ENCODE measurements at regions of chr19 and their contacts with region 1.

Region 1: GRCh38 chr19:49097455-49098288 is 12.4 kb downstream of the SNRNP70 start:
- DNase-seq: peak; percentile 68
- H3K4me3 Mint-ChIP-seq: no peak overlapping the region
- H3K27ac Mint-ChIP-seq: no peak overlapping the region
- H3K4me1 Mint-ChIP-seq: peaks cover 15% of the 10 kb centered on the region
- H3K27me3 Mint-ChIP-seq: no peaks in the 10 kb centered on the region

Region 2: DNA sequence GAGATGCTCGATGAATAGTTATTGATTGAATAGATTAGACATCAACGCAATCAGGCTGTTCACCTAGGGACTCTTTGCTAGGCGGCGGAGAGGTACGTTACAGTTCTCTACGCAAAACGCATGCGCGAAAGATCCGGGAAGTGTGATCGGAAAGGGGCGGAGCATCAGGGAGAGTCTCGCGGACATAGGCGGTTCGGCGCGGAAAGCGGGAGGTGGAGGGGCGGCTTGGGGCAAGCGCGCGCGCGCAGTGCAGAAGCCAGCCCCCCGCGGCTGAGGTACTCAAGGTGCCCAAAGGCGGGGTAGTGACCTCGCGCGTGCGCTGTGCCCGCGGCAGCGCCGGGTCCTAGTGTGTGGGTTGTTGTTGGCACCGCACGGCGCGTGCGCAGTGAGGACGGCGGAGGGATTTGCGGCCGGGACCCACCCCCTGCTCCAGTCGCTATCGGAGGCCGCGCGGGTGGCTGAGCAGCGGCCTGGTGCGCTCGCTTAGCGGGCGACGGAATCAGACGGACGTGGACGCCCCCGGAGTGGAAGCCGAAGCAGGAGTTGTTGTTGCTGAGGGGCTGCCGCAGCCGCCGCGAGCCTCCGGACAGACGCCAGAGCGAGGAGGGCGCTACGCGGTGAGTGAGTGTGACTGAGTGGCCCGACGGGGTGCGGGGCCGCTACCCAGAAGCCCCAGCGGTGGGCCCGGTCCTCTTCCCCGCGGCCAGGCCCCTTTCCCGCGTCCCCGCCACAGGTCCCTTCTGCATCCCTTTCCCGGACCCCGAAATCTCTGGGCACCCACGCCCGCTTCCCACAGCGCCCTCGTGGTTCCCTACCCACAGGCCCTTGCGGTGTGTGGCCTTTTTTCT is 12.4 kb before region 1 on chr19 and contains the start of gene SNRNP70:
- intact Hi-C with region 1: loop called (anchors 1 kb)
- DNase-seq: peak; percentile 99
- H3K4me3 Mint-ChIP-seq: peak within 1 kb of the TSS; percentile 99
- H3K27ac Mint-ChIP-seq: peak within 1 kb of the TSS; percentile 80
- H3K4me1 Mint-ChIP-seq: peaks cover 25% of the 10 kb centered on the region
- H3K27me3 Mint-ChIP-seq: peaks cover 2% of the 10 kb centered on the region
- total RNA-seq, gene SNRNP70: 259 and 272 TPM in 2 replicates

Region 3: DNA sequence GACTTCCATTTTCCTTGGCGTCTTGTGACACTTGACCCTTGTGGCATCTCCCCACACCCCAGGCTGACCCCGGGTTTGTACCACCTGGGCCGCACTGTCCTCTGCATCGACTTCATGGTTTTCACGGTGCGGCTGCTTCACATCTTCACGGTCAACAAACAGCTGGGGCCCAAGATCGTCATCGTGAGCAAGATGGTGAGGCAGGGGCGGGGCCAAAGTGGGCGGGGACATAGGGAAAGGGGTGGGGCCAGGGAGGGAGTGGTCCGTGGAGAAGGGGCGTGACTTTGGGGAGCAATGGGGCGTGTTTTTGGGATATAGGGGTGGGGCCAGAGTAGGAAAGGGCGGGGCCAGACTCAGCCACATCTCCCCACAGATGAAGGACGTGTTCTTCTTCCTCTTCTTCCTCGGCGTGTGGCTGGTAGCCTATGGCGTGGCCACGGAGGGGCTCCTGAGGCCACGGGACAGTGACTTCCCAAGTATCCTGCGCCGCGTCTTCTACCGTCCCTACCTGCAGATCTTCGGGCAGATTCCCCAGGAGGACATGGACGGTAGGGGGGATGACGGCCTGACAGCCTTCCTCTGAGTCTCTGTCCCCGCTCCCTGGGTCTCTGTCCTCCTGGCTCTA is 102.7 kb after region 1 on chr19:
- intact Hi-C with region 1: loop called (anchors 1 kb)
- DNase-seq: no peak
- H3K4me3 Mint-ChIP-seq: no peak overlapping the region
- H3K27ac Mint-ChIP-seq: no peak overlapping the region
- H3K4me1 Mint-ChIP-seq: no peaks in the 10 kb centered on the region
- H3K27me3 Mint-ChIP-seq: peaks cover 2% of the 10 kb centered on the region